OCI-LY7 (cell line): ENCODE measurements at regions of chr4 and their contacts with region 1.

Region 1: GRCh38 chr4:163755013-163755412 is 260.5 kb downstream of the TMA16 start:
- DNase-seq: peak; percentile 55
- H3K4me3 ChIP-seq: no peak overlapping the region
- H3K27ac ChIP-seq: no peak overlapping the region
- H3K4me1 ChIP-seq: no peaks in the 10 kb centered on the region
- CTCF ChIP-seq: peak; percentile 89

Region 2: DNA sequence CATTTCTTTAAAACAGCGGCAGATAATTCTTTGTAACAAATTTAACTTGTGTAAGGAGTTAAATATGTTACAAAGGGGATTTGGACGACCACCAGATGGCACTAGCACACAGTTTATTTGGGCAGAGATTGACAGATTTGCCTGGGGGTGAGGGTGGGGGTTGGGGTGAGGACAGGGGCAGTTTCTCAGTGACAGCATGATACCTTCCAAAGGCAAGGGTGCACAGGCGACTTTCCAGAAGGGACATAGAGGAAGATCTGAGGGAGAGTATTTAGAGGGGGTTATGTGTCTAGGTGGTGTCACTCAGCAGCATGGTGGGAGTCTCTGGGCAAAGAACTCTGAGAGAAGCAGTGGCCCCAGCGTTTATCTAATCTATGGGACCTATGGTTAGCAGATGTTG is 270.1 kb before region 1 on chr4:
- CTCF ChIA-PET with region 1: no interaction called
- POLR2A ChIA-PET with region 1: no interaction called
- intact Hi-C with region 1: loop called (anchors 2 kb)
- DNase-seq: peak; percentile 77
- H3K4me3 ChIP-seq: no peak overlapping the region
- H3K27ac ChIP-seq: no peak overlapping the region
- H3K4me1 ChIP-seq: peaks cover 30% of the 10 kb centered on the region
- CTCF ChIP-seq: peak; percentile 96

Region 3: DNA sequence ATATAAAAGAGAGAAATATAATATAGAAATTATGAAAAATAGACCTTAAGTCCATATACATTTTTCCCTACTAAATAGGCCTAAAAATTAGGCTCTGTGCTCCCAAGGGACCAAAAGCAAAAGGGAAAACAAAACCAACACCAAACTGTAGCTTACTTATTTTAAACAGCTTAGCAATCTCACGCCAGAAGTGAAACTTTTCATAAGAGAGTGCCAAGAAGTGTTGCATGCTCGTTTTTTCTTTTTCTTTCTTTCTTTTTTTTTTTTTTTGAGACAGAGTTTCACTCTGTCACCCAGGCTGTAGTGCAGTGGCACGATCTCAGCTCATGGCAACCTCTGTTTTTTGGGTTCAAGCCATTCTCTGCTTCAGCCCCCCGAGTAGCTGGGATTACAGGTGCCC is 10.2 kb before region 1 on chr4:
- CTCF ChIA-PET with region 1: interaction called, 5 read pairs
- POLR2A ChIA-PET with region 1: interaction called, 10 read pairs
- intact Hi-C with region 1: no loop called
- DNase-seq: peak; percentile 4
- H3K4me3 ChIP-seq: no peak overlapping the region
- H3K27ac ChIP-seq: no peak overlapping the region
- H3K4me1 ChIP-seq: no peaks in the 10 kb centered on the region
- CTCF ChIP-seq: no peak